Activated naive CD4-positive, alpha-beta T cell treated with anti-CD3 and anti-CD28 coated beads for 36 hours (primary cell): ENCODE measurements at regions of chr9 and their contacts with region 1.

Region 1: GRCh38 chr9:101458955-101459631 is 23.5 kb upstream of the ALDOB start:
- DNase-seq: peak; percentile 21
- H3K4me3 Mint-ChIP-seq: no peak overlapping the region
- H3K27ac Mint-ChIP-seq: no peak overlapping the region
- H3K4me1 Mint-ChIP-seq: no peaks in the 10 kb centered on the region
- H3K27me3 Mint-ChIP-seq: peaks cover 9% of the 10 kb centered on the region

Region 2: GRCh38 chr9:101119206-101119819 is 339.8 kb before region 1 on chr9:
- CTCF ChIA-PET with region 1: no interaction called
- intact Hi-C with region 1: loop called (anchors 1 kb)
- DNase-seq: peak; percentile 42
- H3K4me3 Mint-ChIP-seq: no peak overlapping the region
- H3K27ac Mint-ChIP-seq: no peak overlapping the region
- H3K4me1 Mint-ChIP-seq: no peaks in the 10 kb centered on the region
- H3K27me3 Mint-ChIP-seq: no peaks in the 10 kb centered on the region

Region 3: DNA sequence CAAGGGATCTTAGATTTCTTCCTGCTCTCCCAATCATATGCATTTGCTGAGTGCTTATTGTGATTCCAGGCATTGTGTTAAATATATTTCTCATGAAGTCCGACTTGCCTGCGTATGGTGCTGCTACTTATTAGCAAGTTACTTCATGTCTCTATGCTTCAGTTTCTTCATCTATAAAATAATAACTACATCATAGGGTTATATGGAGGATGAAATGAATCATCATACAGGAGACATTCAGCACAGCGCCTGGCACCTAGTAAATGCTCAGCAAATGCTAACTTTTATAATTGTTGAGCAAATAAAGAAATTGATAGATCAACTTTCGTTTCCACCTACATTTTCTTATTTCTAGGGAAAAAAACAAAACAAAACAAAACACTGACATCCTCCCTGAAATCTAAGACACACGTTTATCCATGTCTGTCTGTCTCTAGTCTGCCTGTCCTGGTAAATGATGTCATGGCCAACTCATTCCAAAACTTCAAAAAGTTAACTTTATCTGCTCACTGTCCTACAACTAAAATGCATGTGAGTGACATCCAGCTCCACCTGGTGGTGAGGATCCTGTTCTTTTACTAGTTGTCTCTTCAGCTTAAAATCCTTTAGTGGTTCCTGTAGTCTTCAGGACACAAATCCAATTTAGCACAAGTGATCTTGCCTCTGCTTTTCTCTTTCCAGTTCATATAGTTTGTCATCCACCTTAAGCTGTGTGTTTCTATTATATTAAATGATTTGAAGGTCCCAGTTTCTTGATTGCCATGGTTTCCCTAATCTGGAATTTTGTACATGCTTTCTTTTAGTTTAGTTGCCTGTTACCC is 108.0 kb after region 1 on chr9:
- CTCF ChIA-PET with region 1: interaction called, 4 read pairs
- intact Hi-C with region 1: loop called (anchors 1 kb)
- DNase-seq: peak; percentile 80
- H3K4me3 Mint-ChIP-seq: no peak overlapping the region
- H3K27ac Mint-ChIP-seq: peak overlapping the region; percentile 59
- H3K4me1 Mint-ChIP-seq: peaks cover 53% of the 10 kb centered on the region
- H3K27me3 Mint-ChIP-seq: no peaks in the 10 kb centered on the region

Region 4: GRCh38 chr9:101586651-101587050 is 127.6 kb after region 1 on chr9:
- CTCF ChIA-PET with region 1: no interaction called
- intact Hi-C with region 1: no loop called
- DNase-seq: peak; percentile 32
- H3K4me3 Mint-ChIP-seq: no peak overlapping the region
- H3K27ac Mint-ChIP-seq: no peak overlapping the region
- H3K4me1 Mint-ChIP-seq: peaks cover 7% of the 10 kb centered on the region
- H3K27me3 Mint-ChIP-seq: no peaks in the 10 kb centered on the region

Region 5: DNA sequence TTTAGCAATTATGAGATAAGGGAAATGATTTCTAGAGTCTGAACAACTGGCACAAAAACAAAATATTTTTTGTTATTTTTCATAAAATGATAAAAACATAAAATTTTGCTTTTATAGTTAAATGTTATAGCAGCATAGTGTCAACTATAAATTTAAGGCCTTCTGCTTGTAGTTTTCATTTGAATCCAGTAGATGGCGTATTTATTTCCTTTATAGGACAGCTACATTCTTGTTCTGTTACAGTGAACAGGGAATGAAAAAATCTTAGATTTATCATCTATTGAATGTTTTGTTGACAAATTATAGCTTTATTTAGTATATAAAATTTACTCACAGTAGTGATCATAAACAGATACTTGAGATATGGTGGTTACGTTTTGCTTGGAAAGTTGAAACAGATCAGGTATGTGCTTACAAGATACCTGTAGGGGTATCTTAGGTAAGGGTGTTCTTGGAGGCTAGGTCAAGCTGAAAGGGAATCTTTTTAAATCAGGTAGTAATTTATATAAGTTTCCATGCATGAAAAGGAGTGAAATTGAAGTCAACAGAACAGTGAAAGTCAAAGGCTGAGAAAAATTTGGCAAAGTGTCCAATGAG is 518.6 kb after region 1 on chr9:
- CTCF ChIA-PET with region 1: no interaction called
- intact Hi-C with region 1: loop called (anchors 10 kb)
- DNase-seq: no peak
- H3K4me3 Mint-ChIP-seq: no peak overlapping the region
- H3K27ac Mint-ChIP-seq: no peak overlapping the region
- H3K4me1 Mint-ChIP-seq: no peaks in the 10 kb centered on the region
- H3K27me3 Mint-ChIP-seq: no peaks in the 10 kb centered on the region